ENCODE measurements at regions of chr12 and their contacts with region 1.

Region 1: GRCh38 chr12:569803-570434 is 93.3 kb downstream of the NINJ2 start:
- DNase-seq: peak; percentile 92
- H3K4me3 ChIP-seq: peak overlapping the region; percentile 51 to 64
- H3K27ac ChIP-seq: peak overlapping the region; percentile 77 to 87
- H3K4me1 ChIP-seq: peaks cover 35% of the 10 kb centered on the region
- H3K27me3 ChIP-seq: no peaks in the 10 kb centered on the region
- CTCF ChIP-seq: peak; percentile 90 to 95 (median 90)
- POLR2A ChIP-seq: no peak

Region 2: GRCh38 chr12:538731-539539 is 31.0 kb before region 1 on chr12:
- intact Hi-C with region 1: no loop called
- DNase-seq: peak; percentile 66
- H3K4me3 ChIP-seq: no peak overlapping the region
- H3K27ac ChIP-seq: no peak overlapping the region
- H3K4me1 ChIP-seq: peaks cover 11% of the 10 kb centered on the region
- H3K27me3 ChIP-seq: no peaks in the 10 kb centered on the region
- CTCF ChIP-seq: no peak
- POLR2A ChIP-seq: no peak

Region 3: DNA sequence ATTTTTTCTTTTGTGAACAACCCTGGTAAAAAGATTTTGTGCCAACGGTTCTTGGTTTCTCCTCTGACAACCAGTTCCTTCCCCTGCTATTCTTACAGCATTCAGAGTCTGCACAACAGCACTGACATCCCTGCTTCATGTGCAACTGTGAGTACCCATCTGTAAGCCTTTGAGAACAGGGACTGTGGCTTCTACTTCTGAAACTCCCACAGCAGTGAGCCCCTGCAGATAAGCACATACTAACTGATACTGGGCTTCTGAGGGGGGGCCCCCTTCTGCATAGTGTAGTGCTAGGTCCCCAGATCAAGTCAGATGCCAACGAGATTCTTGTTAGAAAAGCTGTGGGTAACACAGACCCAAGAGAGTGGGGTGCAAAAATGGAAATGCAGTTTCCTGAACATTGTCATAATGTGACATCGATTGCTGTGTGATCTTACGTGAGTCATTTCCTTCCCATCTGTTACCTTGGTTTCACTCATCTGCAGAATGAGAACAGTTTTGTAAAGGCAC is 104.4 kb after region 1 on chr12:
- intact Hi-C with region 1: no loop called
- DNase-seq: no peak
- H3K4me3 ChIP-seq: no peak overlapping the region
- H3K27ac ChIP-seq: no peak overlapping the region
- H3K4me1 ChIP-seq: no peaks in the 10 kb centered on the region
- H3K27me3 ChIP-seq: no peaks in the 10 kb centered on the region
- CTCF ChIP-seq: no peak
- POLR2A ChIP-seq: no peak

Region 4: DNA sequence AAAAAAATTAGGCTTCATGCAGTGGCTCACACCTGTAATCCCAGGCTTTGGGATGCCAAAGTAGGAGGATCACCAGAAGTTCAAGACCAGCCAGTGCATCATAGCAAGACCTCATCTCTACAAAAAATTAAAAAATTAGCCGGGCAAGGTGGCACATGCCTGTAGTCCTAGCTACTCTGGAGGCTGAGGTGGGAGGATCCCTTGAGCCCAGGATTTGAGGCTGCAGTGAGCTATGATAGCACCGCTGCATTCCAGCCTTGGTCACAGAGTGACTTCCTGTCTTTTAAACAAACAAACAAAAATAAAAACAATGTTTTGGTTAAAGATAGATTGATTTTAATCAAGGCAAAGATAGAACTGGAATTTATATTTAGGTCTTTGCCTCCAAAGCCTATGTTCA is 243.0 kb after region 1 on chr12:
- intact Hi-C with region 1: loop called (anchors 2 kb)
- DNase-seq: no peak
- H3K4me3 ChIP-seq: no peak overlapping the region
- H3K27ac ChIP-seq: no peak overlapping the region
- H3K4me1 ChIP-seq: peaks cover 7% of the 10 kb centered on the region
- H3K27me3 ChIP-seq: no peaks in the 10 kb centered on the region
- CTCF ChIP-seq: no peak
- POLR2A ChIP-seq: no peak

Region 5: DNA sequence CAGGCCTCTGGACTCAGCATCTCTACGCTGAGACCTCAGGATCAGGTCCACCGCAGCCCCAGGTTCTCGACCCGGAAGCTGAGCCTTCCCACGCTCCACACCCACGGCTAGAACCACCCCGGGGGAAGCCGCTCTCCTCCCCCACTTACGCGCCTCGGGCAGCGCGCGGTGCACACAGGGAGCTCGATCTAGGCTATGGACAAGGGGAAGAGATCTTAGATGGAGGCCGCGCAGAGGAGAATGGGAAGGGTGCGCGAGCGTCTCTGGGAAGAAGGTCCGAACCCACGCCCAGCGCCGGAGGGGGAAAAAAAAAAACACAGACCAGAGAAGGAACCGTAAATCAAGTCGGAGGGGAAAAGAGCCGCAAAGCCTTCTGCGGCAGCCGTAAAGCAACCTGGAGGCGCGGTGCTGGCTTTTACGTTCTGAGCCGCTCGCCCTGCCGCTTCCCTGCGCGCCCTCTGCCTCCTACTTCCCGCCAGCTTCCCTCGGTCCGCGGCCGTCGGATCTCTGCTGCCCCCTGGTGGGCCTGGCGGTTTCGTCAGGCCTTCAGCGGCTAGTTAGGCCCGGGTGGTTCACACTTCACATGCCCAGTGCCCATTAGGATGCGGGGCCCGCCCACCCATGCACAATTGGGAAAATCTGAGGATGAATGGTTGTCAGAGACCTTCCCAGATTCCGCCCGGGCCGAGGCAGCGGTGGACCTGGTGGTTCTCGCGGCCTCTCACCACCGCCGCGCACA is 379.7 kb after region 1 on chr12 and contains the start of gene RAD52:
- intact Hi-C with region 1: loop called (anchors 2 kb)
- DNase-seq: peak; percentile 98
- H3K4me3 ChIP-seq: peak within 1 kb of the TSS; percentile 89 to 93
- H3K27ac ChIP-seq: peak within 1 kb of the TSS; percentile 89 to 93
- H3K4me1 ChIP-seq: no peaks in the 10 kb centered on the region
- H3K27me3 ChIP-seq: no peaks in the 10 kb centered on the region
- CTCF ChIP-seq: peak; percentile 98 to 100 (median 99)
- POLR2A ChIP-seq: peak; percentile 65
- total RNA-seq, gene RAD52: 20.9 to 29.1 TPM

Measured in testis (tissue), 5 donors.